ENCODE measurements at regions of chr15 and their contacts with region 1.

Region 1: GRCh38 chr15:39580117-39580484 is 778 bp upstream of the THBS1 start:
- DNase-seq: peak; percentile 92
- H3K4me3 ChIP-seq: peak overlapping the region; percentile 51 to 67 (median 62)
- H3K27ac ChIP-seq: peak overlapping the region; percentile 92
- H3K4me1 ChIP-seq: peaks cover 25% of the 10 kb centered on the region
- H3K27me3 ChIP-seq: no peaks in the 10 kb centered on the region
- CTCF ChIP-seq: peak; percentile 77 to 92

Region 2: DNA sequence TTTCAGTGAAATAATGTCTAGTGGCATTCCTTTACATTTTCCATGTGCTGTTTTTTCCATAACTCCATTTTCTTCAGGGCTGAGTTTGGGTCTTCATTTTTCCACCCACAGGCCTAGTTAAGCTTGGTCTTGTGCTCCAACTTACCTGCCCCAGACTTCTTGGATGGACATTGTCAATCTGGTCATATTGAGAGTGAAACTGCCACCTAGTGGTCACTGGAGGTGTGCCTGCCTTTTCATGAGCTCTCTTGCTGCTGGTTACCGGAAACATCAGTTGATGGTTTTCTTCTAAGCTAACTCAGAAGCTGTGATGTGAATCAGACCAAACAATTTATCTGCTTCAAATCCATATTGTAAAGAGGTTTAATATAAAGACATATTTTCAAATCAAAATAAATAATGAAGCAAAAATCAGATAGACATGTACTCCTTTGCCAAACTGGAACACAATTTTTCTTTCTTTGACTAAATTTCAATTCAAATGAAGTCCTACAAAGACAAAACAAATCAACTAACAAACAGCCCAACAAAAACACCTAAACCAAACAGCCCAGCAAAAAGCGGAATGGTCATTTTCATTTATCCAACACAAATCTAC is 880.4 kb before region 1 on chr15:
- CTCF ChIA-PET with region 1: no interaction called
- dilution Hi-C with region 1: no loop called
- in situ Hi-C with region 1: loop called in 1 of 2 experiments (anchors 25 kb)
- intact Hi-C with region 1: no loop called
- DNase-seq: peak; percentile 45
- H3K4me3 ChIP-seq: no peak overlapping the region
- H3K27ac ChIP-seq: no peak overlapping the region
- H3K4me1 ChIP-seq: peaks cover 6% of the 10 kb centered on the region
- H3K27me3 ChIP-seq: no peaks in the 10 kb centered on the region
- CTCF ChIP-seq: peak; percentile 91 to 94

Region 3: DNA sequence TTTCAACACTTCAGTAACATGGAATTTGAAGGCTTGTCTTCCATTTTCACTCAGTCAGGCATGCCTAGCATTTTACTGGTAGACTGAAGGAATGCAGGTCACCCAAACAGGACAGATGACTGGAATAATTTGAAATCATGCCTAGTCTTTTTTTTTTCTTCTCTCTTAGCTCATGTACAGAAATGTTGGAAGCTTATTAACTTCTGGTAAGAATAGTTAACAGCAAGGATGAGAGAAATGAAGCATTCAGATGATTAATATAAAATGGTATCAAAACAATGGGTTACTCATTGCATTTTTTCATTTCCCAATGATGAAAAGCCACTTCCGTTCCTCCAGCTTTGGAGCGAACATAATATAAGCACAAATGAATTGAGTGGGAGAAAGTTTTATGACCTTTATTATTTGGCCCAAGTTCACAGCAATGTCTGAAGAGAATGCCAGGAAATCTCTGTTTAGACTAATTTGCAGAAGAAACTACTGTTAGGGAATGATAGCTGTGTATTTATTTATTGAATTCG is 583.9 kb before region 1 on chr15:
- CTCF ChIA-PET with region 1: no interaction called
- dilution Hi-C with region 1: no loop called
- in situ Hi-C with region 1: no loop called
- intact Hi-C with region 1: loop called (anchors 5 kb)
- DNase-seq: peak; percentile 73
- H3K4me3 ChIP-seq: no peak overlapping the region
- H3K27ac ChIP-seq: peak overlapping the region; percentile 66
- H3K4me1 ChIP-seq: peaks cover 27% of the 10 kb centered on the region
- H3K27me3 ChIP-seq: no peaks in the 10 kb centered on the region
- CTCF ChIP-seq: no peak

Region 4: DNA sequence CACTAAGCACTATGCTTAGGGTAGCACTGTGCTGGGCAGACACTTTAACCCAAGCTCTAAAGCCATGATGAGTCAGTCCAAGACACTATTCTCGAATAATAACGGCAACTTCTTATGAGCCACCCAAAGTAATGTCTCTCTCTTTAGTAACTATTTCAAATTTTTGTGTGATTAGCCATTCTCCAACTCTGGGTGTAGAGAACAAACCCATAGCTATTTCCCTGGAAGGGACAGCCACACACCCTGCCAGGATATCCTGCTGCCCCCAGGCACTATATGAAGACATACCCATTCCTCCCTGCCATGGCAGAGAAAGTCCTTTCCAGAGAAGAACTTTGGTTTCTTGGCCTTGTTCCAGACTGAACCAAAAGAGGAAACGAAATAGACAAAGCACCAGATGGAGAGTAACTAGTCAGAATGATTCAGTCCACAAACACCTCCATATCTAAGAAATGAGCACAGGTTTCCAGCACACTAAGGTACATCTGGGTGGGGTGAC is 384.1 kb before region 1 on chr15:
- CTCF ChIA-PET with region 1: interaction called, 5 read pairs
- dilution Hi-C with region 1: loop called (anchors 5 kb)
- in situ Hi-C with region 1: no loop called
- intact Hi-C with region 1: loop called (anchors 1 kb)
- DNase-seq: peak; percentile 100
- H3K4me3 ChIP-seq: no peak overlapping the region
- H3K27ac ChIP-seq: peak overlapping the region; percentile 90
- H3K4me1 ChIP-seq: peaks cover 81% of the 10 kb centered on the region
- H3K27me3 ChIP-seq: no peaks in the 10 kb centered on the region
- CTCF ChIP-seq: no peak

Region 5: DNA sequence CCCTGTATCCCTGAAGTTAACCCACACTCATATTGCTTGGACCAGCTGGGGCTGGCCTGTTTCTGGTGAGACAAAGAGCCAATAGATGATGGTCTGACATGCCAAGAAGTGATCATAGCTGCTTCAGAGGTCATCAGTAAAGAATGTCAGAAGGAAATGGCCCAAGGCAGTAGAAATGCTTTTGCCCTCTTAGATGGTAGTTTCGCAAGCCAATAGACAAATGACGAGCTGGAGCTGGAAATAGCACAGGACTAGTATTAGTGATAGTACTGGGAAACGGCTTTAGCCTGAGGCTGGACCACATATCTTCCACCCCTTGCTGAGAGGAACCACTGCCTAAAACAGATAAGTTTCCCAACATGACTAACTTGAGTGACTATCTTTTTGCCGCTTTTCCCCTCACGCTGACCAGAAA is 175.3 kb before region 1 on chr15:
- CTCF ChIA-PET with region 1: no interaction called
- dilution Hi-C with region 1: no loop called
- in situ Hi-C with region 1: no loop called
- intact Hi-C with region 1: loop called (anchors 5 kb)
- DNase-seq: peak; percentile 98
- H3K4me3 ChIP-seq: no peak overlapping the region
- H3K27ac ChIP-seq: peak overlapping the region; percentile 56
- H3K4me1 ChIP-seq: peaks cover 32% of the 10 kb centered on the region
- H3K27me3 ChIP-seq: no peaks in the 10 kb centered on the region
- CTCF ChIP-seq: no peak

Region 6: DNA sequence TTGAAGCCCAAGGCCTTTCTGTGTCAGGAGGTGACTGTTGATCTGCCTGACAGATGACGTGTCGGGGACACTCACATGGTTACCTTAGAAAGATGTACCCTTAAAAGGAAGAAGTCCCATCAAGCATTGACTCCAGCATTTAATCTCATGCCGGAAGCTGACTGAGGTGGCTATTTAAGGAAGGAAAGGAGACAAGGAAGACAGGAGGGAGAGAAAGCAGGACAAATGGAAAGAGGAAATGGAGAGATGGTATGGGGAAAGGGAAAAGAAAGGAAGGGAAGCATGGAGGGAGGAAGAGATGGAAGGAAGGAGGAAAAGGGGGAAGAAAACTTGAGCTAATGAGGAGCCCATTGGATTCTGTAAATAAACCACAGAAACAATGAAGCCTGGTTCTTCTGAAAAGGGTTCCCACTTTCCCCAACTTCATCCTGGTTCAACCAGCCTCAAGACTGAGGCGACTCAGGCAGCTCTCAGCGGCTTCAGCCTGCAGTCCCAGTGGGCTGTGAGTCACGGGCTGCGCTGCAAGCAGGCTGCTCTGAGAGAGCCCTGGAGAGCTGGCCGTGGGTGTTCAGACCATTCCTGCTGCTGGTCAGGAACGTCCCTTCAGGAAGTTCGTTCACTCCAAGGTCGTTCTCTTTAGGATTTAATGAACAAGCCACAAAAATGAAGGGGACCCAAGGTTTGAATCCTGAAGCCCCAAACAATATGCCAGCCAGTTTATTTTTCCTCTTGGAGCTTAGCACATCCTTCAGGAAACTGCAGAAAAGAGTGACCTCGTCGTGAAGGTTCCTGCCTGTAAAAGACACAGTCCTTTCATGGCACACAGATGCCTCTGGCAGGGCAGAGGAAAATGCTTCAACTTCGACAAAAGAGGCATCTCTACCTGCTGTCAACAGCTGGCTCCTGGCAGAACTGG is 68.8 kb before region 1 on chr15:
- CTCF ChIA-PET with region 1: interaction called, 3 read pairs
- dilution Hi-C with region 1: no loop called
- in situ Hi-C with region 1: no loop called
- intact Hi-C with region 1: loop called (anchors 5 kb)
- DNase-seq: peak; percentile 74
- H3K4me3 ChIP-seq: no peak overlapping the region
- H3K27ac ChIP-seq: no peak overlapping the region
- H3K4me1 ChIP-seq: peaks cover 10% of the 10 kb centered on the region
- H3K27me3 ChIP-seq: no peaks in the 10 kb centered on the region
- CTCF ChIP-seq: no peak

Region 7: GRCh38 chr15:39594056-39594763 is 14.1 kb after region 1 on chr15:
- CTCF ChIA-PET with region 1: no interaction called
- dilution Hi-C with region 1: no loop called
- in situ Hi-C with region 1: no loop called
- intact Hi-C with region 1: no loop called
- DNase-seq: peak; percentile 24
- H3K4me3 ChIP-seq: no peak overlapping the region
- H3K27ac ChIP-seq: no peak overlapping the region
- H3K4me1 ChIP-seq: peaks cover 4% of the 10 kb centered on the region
- H3K27me3 ChIP-seq: no peaks in the 10 kb centered on the region
- CTCF ChIP-seq: peak in 1 of 2 donors; percentile 21

Measured in mammary epithelial cell (primary cell).